Mucosa of descending colon (tissue), 3 donors: ENCODE measurements at regions of chr1 and their contacts with region 1.

Region 1: DNA sequence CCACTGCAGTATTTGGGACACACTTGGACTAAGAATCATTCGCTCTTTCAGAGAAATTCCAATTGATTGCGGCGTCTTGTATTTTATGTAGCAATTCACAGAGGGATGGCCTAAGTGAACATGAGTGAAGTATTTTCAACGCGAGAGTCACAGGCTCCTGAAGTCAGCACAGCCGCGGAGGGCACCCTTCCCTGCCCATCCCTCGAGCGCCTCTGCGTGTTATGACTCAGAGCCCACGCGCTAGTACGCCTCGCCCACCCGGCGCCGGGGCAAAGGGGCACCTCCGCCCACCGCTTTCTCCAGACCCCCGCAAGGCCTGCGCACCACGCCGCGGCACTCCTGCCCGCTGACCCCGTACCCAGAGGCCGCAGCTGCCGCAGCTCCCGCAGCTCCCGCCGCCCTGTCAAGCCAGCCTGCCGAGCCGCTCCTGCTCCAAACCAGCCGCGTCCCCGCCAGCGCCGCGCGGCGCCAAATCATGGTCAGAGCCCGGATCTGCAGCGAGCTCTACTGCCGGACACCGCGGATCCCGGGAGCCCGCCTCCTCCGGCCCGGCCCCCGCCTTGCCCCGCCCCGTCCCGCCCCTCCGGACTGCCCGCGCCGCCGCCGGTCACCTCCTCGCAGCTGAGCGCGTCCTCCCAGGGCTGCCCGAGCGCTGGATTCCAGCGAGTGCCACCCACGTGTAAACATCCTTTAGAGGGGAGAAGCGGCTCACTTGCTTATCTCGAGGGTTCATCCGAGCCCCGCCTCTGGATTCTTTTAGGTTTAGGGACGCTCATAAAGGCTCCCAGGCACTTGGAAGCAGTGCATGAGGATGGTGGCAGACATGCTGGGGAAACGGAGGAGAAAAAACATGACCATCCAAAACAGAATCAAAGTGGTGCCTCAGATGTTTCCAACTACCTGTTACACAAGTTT is at the start of gene GLRX2:
- DNase-seq: peak; percentile 88 to 92 (median 90)
- ATAC-seq: peak; percentile 97
- H3K4me3 ChIP-seq: peak within 1 kb of the TSS; percentile 77
- H3K4me1 ChIP-seq: peaks cover 11% of the 10 kb centered on the region
- CTCF ChIP-seq: no peak
- total RNA-seq, gene GLRX2: 15.2 to 28.8 (median 23.6) TPM

Region 2: GRCh38 chr1:193059268-193060225 is 45.6 kb before region 1 on chr1 and contains the starts of genes RO60 and UCHL5:
- intact Hi-C with region 1: loop called in 1 of 2 experiments (anchors 5 kb)
- DNase-seq: peak; percentile 96 to 98 (median 97)
- ATAC-seq: peak; percentile 96
- H3K4me3 ChIP-seq: peak within 1 kb of the TSS; percentile 71
- H3K4me1 ChIP-seq: peaks cover 19% of the 10 kb centered on the region
- CTCF ChIP-seq: no peak
- total RNA-seq, gene RO60: 34.1 to 90.8 (median 43.6) TPM
- total RNA-seq, gene UCHL5: 28.7 to 32.7 (median 29.1) TPM